Activated CD8-positive, alpha-beta T cell treated with anti-CD3 and anti-CD28 coated beads for 36 hours (primary cell): ENCODE measurements at regions of chr1 and their contacts with region 1.

Region 1: GRCh38 chr1:167491586-167492461 is 26.5 kb downstream of the CD247 start:
- DNase-seq: peak; percentile 74
- ATAC-seq: peak; percentile 46
- H3K4me3 Mint-ChIP-seq: peak overlapping the region; percentile 67
- H3K27ac Mint-ChIP-seq: peak overlapping the region; percentile 96
- H3K4me1 Mint-ChIP-seq: peaks cover 91% of the 10 kb centered on the region
- H3K27me3 Mint-ChIP-seq: no peaks in the 10 kb centered on the region
- CTCF ChIP-seq: no peak

Region 2: DNA sequence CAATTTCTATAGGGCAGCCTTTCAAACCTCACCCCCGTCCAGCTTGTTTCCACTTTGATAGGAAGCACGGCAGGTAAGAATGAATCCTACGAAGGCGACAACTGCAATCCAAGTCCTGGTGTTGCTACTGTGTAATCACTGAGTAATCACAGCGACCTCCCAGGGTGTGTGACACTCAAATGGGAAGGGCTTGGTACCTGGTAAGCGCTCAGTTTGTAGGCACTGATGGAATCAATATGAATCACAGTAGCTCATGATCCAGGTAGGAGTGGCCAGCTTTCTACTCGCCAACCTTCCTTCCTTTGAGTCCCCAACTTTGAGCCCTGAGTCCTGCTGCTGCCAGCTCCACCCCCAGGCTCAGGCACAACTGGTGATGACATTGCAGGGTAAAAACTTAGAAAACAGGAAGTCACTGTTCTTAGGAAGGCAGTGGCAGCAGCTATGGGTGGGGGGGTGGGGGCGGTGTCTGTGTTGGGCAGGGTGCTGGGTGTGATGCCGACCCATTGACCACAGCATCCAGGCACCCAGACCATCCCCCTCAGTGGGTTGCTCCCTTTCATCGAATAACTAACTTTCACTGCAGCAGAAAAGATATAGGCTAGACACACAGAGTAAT is 44.2 kb before region 1 on chr1:
- CTCF ChIA-PET with region 1: interaction called, 3 read pairs
- POLR2A ChIA-PET with region 1: interaction called, 85 read pairs
- intact Hi-C with region 1: no loop called
- DNase-seq: peak; percentile 90
- ATAC-seq: peak; percentile 82
- H3K4me3 Mint-ChIP-seq: peak overlapping the region; percentile 65
- H3K27ac Mint-ChIP-seq: peak overlapping the region; percentile 91
- H3K4me1 Mint-ChIP-seq: peaks cover 82% of the 10 kb centered on the region
- H3K27me3 Mint-ChIP-seq: no peaks in the 10 kb centered on the region
- CTCF ChIP-seq: no peak

Region 3: GRCh38 chr1:167474191-167474716 is 17.6 kb before region 1 on chr1:
- CTCF ChIA-PET with region 1: interaction called, 5 read pairs
- POLR2A ChIA-PET with region 1: interaction called, 32 read pairs
- intact Hi-C with region 1: no loop called
- DNase-seq: peak; percentile 72
- ATAC-seq: peak; percentile 58
- H3K4me3 Mint-ChIP-seq: peak overlapping the region; percentile 59
- H3K27ac Mint-ChIP-seq: peak overlapping the region; percentile 86
- H3K4me1 Mint-ChIP-seq: peaks cover 88% of the 10 kb centered on the region
- H3K27me3 Mint-ChIP-seq: no peaks in the 10 kb centered on the region
- CTCF ChIP-seq: no peak

Region 4: GRCh38 chr1:167617153-167618147 is 125.6 kb after region 1 on chr1:
- CTCF ChIA-PET with region 1: no interaction called
- POLR2A ChIA-PET with region 1: no interaction called
- intact Hi-C with region 1: no loop called
- DNase-seq: peak; percentile 35
- ATAC-seq: peak; percentile 68
- H3K4me3 Mint-ChIP-seq: peak overlapping the region; percentile 48
- H3K27ac Mint-ChIP-seq: peak overlapping the region; percentile 86
- H3K4me1 Mint-ChIP-seq: peaks cover 44% of the 10 kb centered on the region
- H3K27me3 Mint-ChIP-seq: no peaks in the 10 kb centered on the region
- CTCF ChIP-seq: no peak